Ascending aorta (tissue), 2 donors: ENCODE measurements at regions of chr5 and their contacts with region 1.

Region 1: DNA sequence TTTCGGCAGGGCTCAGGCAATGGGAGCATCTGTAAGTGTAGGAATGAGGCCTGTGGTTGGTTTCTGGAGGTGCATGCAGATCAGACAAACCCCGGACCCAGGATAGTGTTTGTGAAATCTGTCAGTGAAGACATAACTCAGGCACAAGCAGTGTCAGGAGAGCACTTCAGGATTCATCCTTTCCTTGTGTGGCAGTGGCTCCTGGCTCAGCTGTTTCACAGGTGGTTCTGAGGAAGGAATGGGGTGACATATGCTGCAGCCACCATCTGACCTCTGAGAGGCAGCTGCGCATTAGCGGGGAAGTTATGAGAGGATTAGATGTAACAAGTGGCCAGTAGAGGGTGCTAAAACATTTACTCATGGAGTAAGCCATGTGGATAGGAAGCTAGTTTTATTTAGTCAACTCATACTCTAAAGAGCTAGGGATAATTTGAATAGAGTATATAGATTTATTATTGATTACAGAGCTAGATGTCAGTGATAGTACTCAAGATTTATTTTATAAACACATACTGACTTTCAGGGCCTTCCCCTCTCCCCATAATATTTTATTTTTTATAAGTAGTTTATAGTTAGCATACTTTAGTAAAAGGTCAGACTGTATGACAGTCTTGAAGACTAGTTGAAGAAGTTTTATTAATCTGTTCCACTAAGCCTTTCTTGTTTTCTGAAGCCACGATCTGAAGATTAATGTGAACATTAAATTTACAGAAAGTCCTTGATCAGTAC is 28.4 kb downstream of the NNT start:
- DNase-seq: peak in 1 of 2 donors; percentile 66
- H3K4me3 ChIP-seq: no peak overlapping the region
- H3K27ac ChIP-seq: peak overlapping the region in 1 of 2 donors; percentile 40
- H3K4me1 ChIP-seq: peaks cover 0 to 17% of the 10 kb centered on the region in 2 donors
- H3K27me3 ChIP-seq: no peaks in the 10 kb centered on the region
- CTCF ChIP-seq: peak; percentile 31 to 74 (median 70)

Region 2: DNA sequence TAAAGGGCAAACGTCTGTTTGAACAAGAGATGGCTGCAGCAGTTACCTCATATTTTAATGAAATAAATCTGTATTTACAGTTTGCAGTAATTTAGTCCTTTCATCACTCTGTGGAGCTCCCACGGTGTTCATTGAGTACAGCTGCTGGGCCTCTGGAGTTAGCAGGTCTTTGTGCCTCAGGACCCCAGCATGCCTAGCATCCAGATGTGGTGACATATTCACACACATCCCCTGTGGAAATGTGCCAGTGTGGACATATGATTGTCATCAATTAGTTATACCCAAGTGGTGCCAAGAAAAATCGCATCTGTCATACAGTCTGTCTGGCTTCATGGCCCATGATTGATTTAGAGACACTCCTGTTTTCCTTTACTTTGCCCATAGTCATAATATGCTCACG is 48.9 kb after region 1 on chr5:
- intact Hi-C with region 1: loop called (anchors 10 kb)
- DNase-seq: no peak
- H3K4me3 ChIP-seq: no peak overlapping the region
- H3K27ac ChIP-seq: peak overlapping the region in 1 of 2 donors; percentile 17
- H3K4me1 ChIP-seq: peaks cover 3 to 35% of the 10 kb centered on the region in 2 donors
- H3K27me3 ChIP-seq: no peaks in the 10 kb centered on the region
- CTCF ChIP-seq: no peak

Region 3: GRCh38 chr5:44332285-44332971 is 701.1 kb after region 1 on chr5:
- intact Hi-C with region 1: loop called (anchors 10 kb)
- DNase-seq: no peak
- H3K4me3 ChIP-seq: no peak overlapping the region
- H3K27ac ChIP-seq: peak overlapping the region in 1 of 2 donors; percentile 19
- H3K4me1 ChIP-seq: no peaks in the 10 kb centered on the region
- H3K27me3 ChIP-seq: no peaks in the 10 kb centered on the region
- CTCF ChIP-seq: peak in 2 of 3 experiments; percentile 35 to 49